ENCODE measurements at regions of chr3 and their contacts with region 1.

Region 1: GRCh38 chr3:39260957-39261356 is 18.9 kb downstream of the CX3CR1 start:
- DNase-seq: peak; percentile 62 to 83
- ATAC-seq: peak; percentile 71 to 93 (median 75)
- H3K4me3 ChIP-seq: no peak overlapping the region
- H3K4me3 Mint-ChIP-seq: peak overlapping the region; percentile 84
- H3K27ac ChIP-seq: peak overlapping the region; percentile 90
- H3K27ac Mint-ChIP-seq: peak overlapping the region; percentile 91 to 92
- H3K4me1 ChIP-seq: peaks cover 75% of the 10 kb centered on the region
- H3K4me1 Mint-ChIP-seq: peaks cover 90 to 97% of the 10 kb centered on the region in 2 donors
- H3K27me3 ChIP-seq: no peaks in the 10 kb centered on the region
- H3K27me3 Mint-ChIP-seq: no peaks in the 10 kb centered on the region
- CTCF ChIP-seq: peak; percentile 55

Region 2: DNA sequence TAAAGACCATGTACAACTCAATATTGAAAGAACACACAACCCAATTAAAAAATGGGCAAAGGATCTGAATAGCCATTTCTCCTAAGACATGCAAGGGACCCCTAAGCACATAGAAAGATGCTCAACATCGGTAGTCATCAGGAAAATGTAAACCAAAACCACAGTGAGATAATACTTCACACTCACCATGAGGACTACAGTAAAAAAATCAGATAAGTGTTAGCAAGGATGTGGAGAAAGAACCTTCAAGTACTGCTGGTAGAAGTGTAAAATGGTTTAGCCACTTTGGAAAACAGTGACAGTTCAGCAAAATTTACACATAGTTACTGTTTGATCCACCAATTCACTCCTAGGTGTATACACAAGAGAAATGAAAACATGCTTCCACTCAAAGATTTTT is 38.5 kb before region 1 on chr3:
- intact Hi-C with region 1: loop called (anchors 1 kb)
- DNase-seq: peak in 1 of 2 donors; percentile 48
- ATAC-seq: peak; percentile 71 to 88 (median 85)
- H3K4me3 ChIP-seq: no peak overlapping the region
- H3K4me3 Mint-ChIP-seq: peak overlapping the region; percentile 89
- H3K27ac ChIP-seq: peak overlapping the region; percentile 47
- H3K27ac Mint-ChIP-seq: peak overlapping the region; percentile 86 to 89
- H3K4me1 ChIP-seq: peaks cover 32% of the 10 kb centered on the region
- H3K4me1 Mint-ChIP-seq: peaks cover 78 to 84% of the 10 kb centered on the region in 2 donors
- H3K27me3 ChIP-seq: no peaks in the 10 kb centered on the region
- H3K27me3 Mint-ChIP-seq: no peaks in the 10 kb centered on the region
- CTCF ChIP-seq: no peak